Activated CD4-positive, alpha-beta T cell treated with anti-CD3 and anti-CD28 coated beads for 36 hours (primary cell): ENCODE measurements at regions of chr16 and their contacts with region 1.

Region 1: DNA sequence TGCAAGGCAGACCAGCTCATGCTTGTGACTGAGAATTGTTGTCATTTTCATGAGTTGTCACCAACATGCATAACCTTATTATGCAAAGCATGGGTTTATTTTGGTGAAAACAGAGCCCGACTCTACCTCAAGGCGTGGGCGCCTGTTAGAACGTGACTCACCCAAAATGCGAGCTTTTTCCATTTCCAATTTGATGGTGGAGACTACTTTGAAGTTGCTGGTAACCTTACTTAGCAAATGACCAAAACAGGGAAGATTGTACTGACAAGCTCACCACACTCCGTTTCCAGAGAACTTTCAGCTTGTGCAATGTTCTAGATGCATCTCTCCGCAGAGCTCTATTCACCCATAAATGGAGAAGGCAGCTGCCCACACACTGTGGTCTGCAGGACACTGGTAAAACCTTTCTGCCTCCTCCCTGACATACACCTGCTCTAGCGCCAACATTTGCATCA is 284.5 kb downstream of the MAF start:
- DNase-seq: peak; percentile 85
- ATAC-seq: peak; percentile 89
- H3K4me3 Mint-ChIP-seq: no peak overlapping the region
- H3K27ac Mint-ChIP-seq: peak overlapping the region; percentile 88
- H3K4me1 Mint-ChIP-seq: peaks cover 28% of the 10 kb centered on the region
- H3K27me3 Mint-ChIP-seq: peaks cover 15% of the 10 kb centered on the region

Region 2: DNA sequence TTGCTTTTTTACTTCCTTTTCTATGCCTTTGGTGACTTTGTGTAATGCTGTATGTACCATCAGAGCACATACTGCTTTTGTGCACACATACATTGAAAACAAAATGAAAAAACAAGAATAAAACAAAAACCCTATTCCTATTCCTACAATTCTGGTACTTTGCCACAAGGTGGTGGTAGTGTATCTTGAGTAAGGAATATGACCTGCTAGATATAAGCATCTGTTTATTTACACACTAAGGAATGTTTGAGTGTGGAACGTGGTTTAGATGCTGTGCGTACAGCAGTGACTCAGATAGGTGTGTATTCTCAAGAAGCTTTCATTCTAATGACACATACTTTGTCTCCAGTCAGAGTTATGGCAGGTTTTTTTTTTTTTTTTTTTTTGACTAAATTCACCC is 610.3 kb before region 1 on chr16:
- CTCF ChIA-PET with region 1: no interaction called
- POLR2A ChIA-PET with region 1: no interaction called
- intact Hi-C with region 1: loop called in 1 of 2 experiments (anchors 2 kb)
- DNase-seq: peak; percentile 30
- ATAC-seq: peak; percentile 99
- H3K4me3 Mint-ChIP-seq: no peak overlapping the region
- H3K27ac Mint-ChIP-seq: no peak overlapping the region
- H3K4me1 Mint-ChIP-seq: peaks cover 13% of the 10 kb centered on the region
- H3K27me3 Mint-ChIP-seq: no peaks in the 10 kb centered on the region

Region 3: GRCh38 chr16:78892951-78893733 is 422.9 kb before region 1 on chr16:
- CTCF ChIA-PET with region 1: no interaction called
- POLR2A ChIA-PET with region 1: no interaction called
- intact Hi-C with region 1: loop called (anchors 1 kb)
- DNase-seq: peak; percentile 39
- ATAC-seq: peak; percentile 65
- H3K4me3 Mint-ChIP-seq: no peak overlapping the region
- H3K27ac Mint-ChIP-seq: peak overlapping the region; percentile 80
- H3K4me1 Mint-ChIP-seq: peaks cover 61% of the 10 kb centered on the region
- H3K27me3 Mint-ChIP-seq: no peaks in the 10 kb centered on the region

Region 4: GRCh38 chr16:79071424-79071823 is 244.6 kb before region 1 on chr16:
- CTCF ChIA-PET with region 1: no interaction called
- POLR2A ChIA-PET with region 1: interaction called, 10 read pairs
- intact Hi-C with region 1: loop called (anchors 1 to 2 kb)
- DNase-seq: no peak
- ATAC-seq: no peak
- H3K4me3 Mint-ChIP-seq: no peak overlapping the region
- H3K27ac Mint-ChIP-seq: peak overlapping the region; percentile 34
- H3K4me1 Mint-ChIP-seq: peaks cover 64% of the 10 kb centered on the region
- H3K27me3 Mint-ChIP-seq: peaks cover 2% of the 10 kb centered on the region

Region 5: DNA sequence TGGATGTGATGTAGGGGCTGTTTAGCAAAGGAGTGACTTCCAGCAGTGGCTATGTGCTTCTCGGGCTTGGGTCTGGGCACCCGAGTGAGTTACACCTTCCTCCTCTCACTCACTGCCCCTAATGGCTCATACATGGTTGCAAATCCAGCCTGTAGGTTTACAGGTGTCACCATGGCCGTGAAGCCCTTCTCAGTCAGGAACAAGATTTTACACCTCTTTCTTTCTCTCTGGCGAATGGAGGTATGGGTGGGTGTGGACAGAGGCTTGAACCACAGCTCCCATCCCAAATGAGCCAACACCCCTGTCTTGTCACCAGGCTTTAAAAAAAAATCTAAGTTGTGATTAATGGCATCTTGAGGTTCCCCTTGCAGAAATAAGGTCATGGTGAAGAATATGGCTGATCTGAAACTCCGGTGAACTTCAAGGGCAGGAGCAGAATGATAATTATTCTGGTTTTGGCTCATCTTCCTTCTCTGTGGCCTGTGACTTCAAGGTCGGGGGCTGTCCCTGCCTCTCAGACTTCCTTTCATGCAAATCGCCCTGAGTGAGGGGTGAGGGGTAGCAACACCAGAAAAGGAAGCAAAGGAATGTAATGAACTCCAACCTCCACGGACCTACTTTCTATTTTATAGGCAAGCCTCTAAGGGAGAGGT is 46.7 kb before region 1 on chr16:
- CTCF ChIA-PET with region 1: interaction called, 10 read pairs
- POLR2A ChIA-PET with region 1: interaction called, 20 read pairs
- intact Hi-C with region 1: loop called (anchors 1 kb)
- DNase-seq: peak; percentile 86
- ATAC-seq: peak; percentile 70
- H3K4me3 Mint-ChIP-seq: peak overlapping the region; percentile 19
- H3K27ac Mint-ChIP-seq: peak overlapping the region; percentile 86
- H3K4me1 Mint-ChIP-seq: peaks cover 89% of the 10 kb centered on the region
- H3K27me3 Mint-ChIP-seq: peaks cover 26% of the 10 kb centered on the region

Region 6: DNA sequence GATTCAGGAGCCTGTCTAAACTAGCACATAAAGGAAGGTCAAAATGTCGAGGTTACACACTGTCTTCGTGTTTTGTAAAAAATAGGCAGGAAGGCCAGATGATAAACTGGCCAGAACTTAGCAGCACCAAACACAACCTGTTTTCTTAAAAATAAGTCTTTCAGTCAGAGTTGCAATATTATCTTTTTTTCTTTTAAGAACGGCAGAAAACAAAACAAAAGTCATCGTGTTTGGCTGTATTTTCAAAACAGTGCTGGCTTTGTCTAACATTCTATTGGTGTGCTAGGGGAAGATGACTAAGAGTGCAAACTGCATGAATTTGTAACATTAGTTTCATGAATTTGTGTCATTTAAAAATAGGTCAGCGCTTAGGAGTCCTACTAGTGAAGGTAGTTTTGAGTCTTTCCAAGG is 279.2 kb after region 1 on chr16:
- CTCF ChIA-PET with region 1: no interaction called
- POLR2A ChIA-PET with region 1: interaction called, 4 read pairs
- intact Hi-C with region 1: loop called in 1 of 2 experiments (anchors 1 kb)
- DNase-seq: no peak
- ATAC-seq: peak; percentile 22
- H3K4me3 Mint-ChIP-seq: peak overlapping the region; percentile 74
- H3K27ac Mint-ChIP-seq: peak overlapping the region; percentile 85
- H3K4me1 Mint-ChIP-seq: peaks cover 21% of the 10 kb centered on the region
- H3K27me3 Mint-ChIP-seq: peaks cover 18% of the 10 kb centered on the region